HAP-1 (cell line): ENCODE measurements at regions of chr3 and their contacts with region 1.

Region 1: DNA sequence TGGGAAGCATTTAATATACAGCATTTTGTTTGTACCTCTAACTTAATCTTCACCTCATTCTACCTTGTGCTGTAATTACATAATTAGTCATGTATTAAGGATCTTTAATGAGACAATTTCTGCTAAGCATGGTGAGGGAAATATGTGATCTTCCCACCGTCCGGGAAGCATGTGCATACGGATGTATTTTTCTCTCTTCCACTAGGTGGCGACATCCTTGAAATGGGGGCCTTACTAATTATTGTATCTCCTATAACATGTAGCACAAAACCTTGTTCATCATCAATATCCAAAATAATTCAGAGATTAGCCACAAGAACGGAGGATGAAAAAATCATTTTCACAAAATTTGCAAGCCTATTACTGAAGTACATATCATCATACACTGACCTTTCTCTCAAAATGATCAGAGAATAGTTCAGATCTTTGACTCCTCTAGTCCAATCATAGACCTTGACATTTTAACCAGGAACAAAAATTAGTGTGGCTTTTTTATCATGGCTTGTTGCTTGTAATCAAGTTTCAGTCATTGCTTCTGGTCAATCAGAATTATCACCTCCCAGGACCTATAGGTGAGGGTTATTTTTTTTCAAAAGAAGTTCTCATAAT is 148.9 kb upstream of the GBE1 start:
- DNase-seq: peak; percentile 57 to 58
- H3K4me3 ChIP-seq: no peak overlapping the region
- H3K4me1 ChIP-seq: no peaks in the 10 kb centered on the region; the same call in 1 of the 2 replicates
- H3K27me3 ChIP-seq: no peaks in the 10 kb centered on the region

Region 2: DNA sequence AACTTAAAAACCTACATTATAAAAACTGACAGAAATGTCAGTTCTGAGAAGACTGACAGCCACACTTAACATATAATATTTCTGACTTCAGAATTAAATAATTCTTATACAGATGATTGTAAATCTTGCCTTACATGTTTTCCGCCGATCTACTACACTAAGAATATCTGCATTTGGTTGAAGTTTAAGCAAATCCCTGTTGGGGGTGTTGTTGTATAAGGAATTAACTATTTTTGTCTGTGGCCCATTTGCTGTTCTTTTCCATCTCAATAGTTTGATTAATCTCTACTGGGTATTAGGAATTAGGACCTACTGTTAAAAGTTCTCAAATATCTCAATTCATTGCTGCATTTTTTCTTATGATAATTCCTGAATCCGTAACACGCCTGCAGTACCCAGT is 1304.3 kb before region 1 on chr3:
- in situ Hi-C with region 1: no loop called
- DNase-seq: peak in 1 of 2 experiments; percentile 37
- H3K4me3 ChIP-seq: no peak overlapping the region
- H3K4me1 ChIP-seq: peaks cover 10% of the 10 kb centered on the region
- H3K27me3 ChIP-seq: no peaks in the 10 kb centered on the region

Region 3: GRCh38 chr3:81554388-81554787 is 356.0 kb before region 1 on chr3:
- in situ Hi-C with region 1: no loop called
- DNase-seq: no peak
- H3K4me3 ChIP-seq: no peak overlapping the region
- H3K4me1 ChIP-seq: peaks cover 11% of the 10 kb centered on the region
- H3K27me3 ChIP-seq: no peaks in the 10 kb centered on the region

Region 4: DNA sequence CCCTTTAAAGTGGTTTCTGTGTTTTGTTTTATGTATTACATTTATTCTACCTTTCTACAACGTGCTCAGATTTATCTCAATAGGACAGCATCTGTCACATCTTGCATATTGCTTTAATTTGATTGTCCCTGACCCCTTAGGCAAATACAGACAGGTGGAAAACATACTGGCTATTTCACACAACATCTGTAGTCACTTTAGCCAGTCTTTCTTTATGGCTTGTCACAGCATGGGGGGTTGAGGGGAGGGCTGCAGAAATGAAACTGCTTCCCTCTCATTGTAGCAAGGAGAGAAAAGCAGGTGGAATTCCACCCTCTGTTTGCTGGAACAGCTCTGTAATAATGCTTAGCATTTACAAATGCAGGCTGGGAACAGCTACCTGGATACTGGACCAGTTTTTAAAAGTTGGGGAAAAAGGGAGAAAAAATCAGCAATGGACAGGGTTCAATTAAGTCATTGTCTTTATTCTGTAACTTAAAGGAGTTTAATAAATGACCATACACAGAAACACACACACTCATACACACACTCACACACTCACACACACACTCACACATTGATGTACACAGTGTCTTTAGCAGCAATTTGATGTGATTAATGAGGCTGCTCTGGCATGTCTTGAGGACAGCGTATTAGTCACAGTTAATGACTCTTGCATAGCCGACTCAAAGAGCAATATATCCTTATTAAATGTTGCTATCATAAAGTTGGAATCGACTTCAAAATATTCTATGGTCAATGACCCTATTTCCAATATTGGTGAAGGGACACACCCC is 134.8 kb after region 1 on chr3:
- in situ Hi-C with region 1: no loop called
- DNase-seq: no peak
- H3K4me3 ChIP-seq: no peak overlapping the region
- H3K4me1 ChIP-seq: no peaks in the 10 kb centered on the region
- H3K27me3 ChIP-seq: no peaks in the 10 kb centered on the region

Region 5: GRCh38 chr3:82133070-82133606 is 222.8 kb after region 1 on chr3:
- in situ Hi-C with region 1: loop called (anchors 25 kb)
- DNase-seq: peak; percentile 61 to 69
- H3K4me3 ChIP-seq: no peak overlapping the region
- H3K4me1 ChIP-seq: peaks cover 18% of the 10 kb centered on the region
- H3K27me3 ChIP-seq: no peaks in the 10 kb centered on the region